Activated CD8-positive, alpha-beta memory T cell treated with anti-CD3 and anti-CD28 coated beads, Interleukin-2, amount 10 ng/mL, durations not matched to agents 7 days and 5 days (primary cell): ENCODE measurements at regions of chr20 and their contacts with region 1.

Region 1: DNA sequence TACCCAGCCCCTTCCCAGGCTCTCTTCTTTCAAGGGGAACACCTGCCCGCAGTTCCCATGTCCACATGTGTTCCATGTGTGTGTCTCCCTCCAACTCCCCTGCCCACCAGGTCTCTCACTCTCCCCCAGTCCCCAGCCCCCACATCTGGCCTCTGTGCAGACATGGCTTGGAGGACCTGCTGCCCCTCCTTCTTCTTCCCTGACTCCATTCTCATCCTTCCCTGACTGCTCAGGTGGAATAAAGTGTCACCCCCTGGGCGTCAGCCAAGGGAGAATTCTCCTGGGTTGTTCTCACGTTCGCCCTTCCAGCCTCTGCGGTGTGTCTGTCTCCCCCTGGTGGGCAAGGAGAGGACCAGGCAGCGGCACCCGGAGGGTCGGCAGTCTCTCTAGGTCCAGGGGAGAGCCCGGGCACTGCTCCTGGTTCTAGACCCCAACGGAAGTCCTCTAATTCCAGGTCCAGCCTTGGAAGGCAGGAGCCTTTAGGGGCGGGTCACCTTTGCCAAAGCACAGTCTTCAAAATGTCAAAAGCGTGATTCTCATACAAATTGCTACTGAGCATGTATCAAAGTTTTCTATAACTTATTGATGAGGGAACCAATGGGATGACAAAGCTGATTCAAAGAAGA is 50.5 kb downstream of the EBF4 start:
- DNase-seq: peak; percentile 80
- ATAC-seq: peak; percentile 81
- H3K4me3 Mint-ChIP-seq: no peak overlapping the region
- H3K27ac Mint-ChIP-seq: peak overlapping the region; percentile 47
- H3K4me1 Mint-ChIP-seq: peaks cover 32% of the 10 kb centered on the region
- H3K27me3 Mint-ChIP-seq: peaks cover 12% of the 10 kb centered on the region

Region 2: DNA sequence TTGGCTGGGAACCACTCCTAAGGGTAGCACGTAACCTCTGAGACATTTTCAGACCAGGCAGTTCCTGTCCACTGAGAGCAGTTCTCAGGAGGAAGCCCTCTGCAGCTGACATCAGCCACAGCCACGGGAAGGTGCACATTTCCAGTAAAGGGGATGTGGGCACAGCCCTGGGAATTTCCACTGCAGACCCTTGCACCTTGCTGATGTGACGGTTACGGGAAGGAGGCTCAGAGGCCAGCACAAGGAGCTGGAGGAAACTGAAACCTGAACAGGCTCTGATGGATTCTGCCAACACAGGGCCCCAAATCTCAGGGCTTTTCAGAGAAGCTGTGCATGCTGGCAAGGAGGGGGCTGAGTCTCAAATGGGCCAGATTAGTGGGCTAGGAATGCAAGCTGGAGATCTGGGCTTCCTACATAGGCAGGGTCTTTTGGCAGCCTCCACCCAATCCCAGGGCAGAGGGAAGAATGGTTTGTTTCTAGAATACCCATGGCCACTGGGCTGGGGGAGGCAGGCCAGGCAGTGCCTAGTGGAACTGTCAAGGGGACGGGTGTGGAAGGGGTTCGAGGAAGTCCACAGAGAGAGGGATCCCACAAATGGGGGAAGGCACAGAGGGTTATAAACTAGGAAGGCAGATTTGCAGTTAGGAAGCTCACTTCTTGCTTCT is 36.2 kb before region 1 on chr20:
- CTCF ChIA-PET with region 1: interaction called, 11 read pairs
- DNase-seq: peak; percentile 57
- ATAC-seq: peak; percentile 70
- H3K4me3 Mint-ChIP-seq: no peak overlapping the region
- H3K27ac Mint-ChIP-seq: peak overlapping the region; percentile 61
- H3K4me1 Mint-ChIP-seq: peaks cover 19% of the 10 kb centered on the region
- H3K27me3 Mint-ChIP-seq: peaks cover 8% of the 10 kb centered on the region

Region 3: GRCh38 chr20:2713285-2713684 is 29.8 kb before region 1 on chr20:
- CTCF ChIA-PET with region 1: interaction called, 28 read pairs
- DNase-seq: no peak
- ATAC-seq: no peak
- H3K4me3 Mint-ChIP-seq: no peak overlapping the region
- H3K27ac Mint-ChIP-seq: no peak overlapping the region
- H3K4me1 Mint-ChIP-seq: peaks cover 3% of the 10 kb centered on the region
- H3K27me3 Mint-ChIP-seq: peaks cover 10% of the 10 kb centered on the region

Region 4: DNA sequence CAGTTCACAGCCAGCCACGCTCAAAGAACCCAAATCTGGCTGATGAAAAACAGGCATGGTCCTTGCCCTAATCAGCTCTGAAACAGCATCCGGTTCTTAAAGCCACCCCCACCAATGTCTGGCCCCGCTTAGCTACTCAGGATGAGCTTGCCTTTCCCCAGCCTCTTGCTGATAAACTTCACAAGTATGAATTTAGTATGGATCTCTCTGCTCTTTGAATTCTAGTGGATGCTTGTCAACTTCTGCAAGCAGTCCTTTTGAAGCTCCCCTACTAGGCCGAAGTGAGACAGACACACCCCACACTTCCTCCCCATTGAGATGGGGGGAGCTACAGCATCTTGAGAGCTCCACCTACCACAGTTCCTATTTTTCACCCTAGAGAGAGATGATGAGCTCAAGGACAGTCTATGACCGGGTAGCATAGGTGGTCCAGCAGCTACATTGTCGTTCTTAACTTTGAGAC is 13.8 kb before region 1 on chr20:
- CTCF ChIA-PET with region 1: interaction called, 28 read pairs
- DNase-seq: no peak
- ATAC-seq: peak; percentile 78
- H3K4me3 Mint-ChIP-seq: no peak overlapping the region
- H3K27ac Mint-ChIP-seq: peak overlapping the region; percentile 66
- H3K4me1 Mint-ChIP-seq: peaks cover 7% of the 10 kb centered on the region
- H3K27me3 Mint-ChIP-seq: peaks cover 41% of the 10 kb centered on the region